Sciatic nerve (tissue), 2 donors: ENCODE measurements at regions of chr16 and their contacts with region 1.

Region 1: DNA sequence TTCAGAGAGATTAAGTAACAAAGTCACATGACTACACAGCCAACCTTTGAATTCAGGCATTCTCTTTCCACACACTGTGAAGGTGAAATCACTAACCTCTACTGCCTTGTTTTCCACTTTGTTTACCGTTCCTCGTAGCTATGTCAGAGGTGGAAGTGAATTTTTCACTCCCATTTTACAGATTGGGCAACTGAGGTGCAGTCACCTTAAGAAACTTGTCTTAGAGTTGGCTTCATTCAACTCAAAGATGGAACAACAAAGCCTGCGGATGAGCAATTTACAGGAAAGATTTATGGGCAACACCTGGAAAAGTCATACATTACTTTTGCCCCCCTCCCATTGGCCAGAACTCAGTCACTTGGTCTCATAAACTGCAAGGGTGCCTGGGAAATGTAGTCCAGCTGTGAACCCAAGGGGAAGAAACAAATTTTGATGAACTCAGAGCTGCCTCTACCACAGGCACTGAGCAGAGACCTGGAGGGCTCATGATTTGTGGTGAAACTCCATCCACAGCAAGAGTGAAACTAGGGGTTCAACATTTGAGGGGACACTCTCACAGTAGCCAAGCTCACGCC is 784.6 kb upstream of the EEF2KMT start:
- DNase-seq: no peak
- ATAC-seq: no peak

Region 2: DNA sequence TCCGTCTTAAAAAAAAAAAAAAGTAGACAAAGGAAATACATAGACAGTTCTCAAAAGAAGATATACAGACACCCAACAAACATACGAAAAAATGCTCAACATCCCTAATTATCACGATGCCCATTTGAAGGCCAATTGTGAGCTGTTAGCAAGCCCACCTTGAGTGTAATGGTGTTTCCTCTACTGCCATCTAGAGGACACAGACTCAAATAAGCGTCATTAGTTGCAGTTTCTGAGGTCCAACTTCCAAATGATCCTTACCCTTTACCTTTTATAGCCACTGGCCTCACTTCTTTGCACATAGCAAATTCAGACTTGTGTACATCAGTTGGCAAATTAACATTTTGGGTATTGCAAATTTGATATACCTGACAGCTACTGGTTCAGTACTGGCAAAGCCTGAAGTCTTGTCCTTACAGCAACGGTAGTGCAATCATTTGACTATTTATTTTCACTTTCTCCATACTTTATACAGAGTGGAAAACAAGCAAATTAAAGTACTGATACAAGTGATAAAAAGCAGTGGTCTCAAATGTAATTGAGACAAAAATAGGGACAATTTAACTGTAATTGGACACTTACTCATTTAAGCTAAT is 248.2 kb before region 1 on chr16:
- intact Hi-C with region 1: loop called (anchors 5 kb)
- DNase-seq: no peak
- ATAC-seq: no peak